Activated naive CD4-positive, alpha-beta T cell treated with anti-CD3 and anti-CD28 coated beads for 36 hours (primary cell): ENCODE measurements at regions of chrX and their contacts with region 1.

Region 1: GRCh38 chrX:68828740-68829552 is at the start of gene EFNB1:
- DNase-seq: peak; percentile 86
- H3K4me3 Mint-ChIP-seq: peak within 1 kb of the TSS; percentile 81
- H3K27ac Mint-ChIP-seq: no peak within 1 kb of the TSS
- H3K4me1 Mint-ChIP-seq: peaks cover 14% of the 10 kb centered on the region
- H3K27me3 Mint-ChIP-seq: no peaks in the 10 kb centered on the region
- total RNA-seq, gene EFNB1: 3.9 to 4.2 TPM

Region 2: GRCh38 chrX:68504237-68504636 is 324.7 kb before region 1 on chrX:
- CTCF ChIA-PET with region 1: no interaction called
- intact Hi-C with region 1: loop called (anchors 5 kb)
- DNase-seq: peak; percentile 86
- H3K4me3 Mint-ChIP-seq: no peak overlapping the region
- H3K27ac Mint-ChIP-seq: peak overlapping the region; percentile 92
- H3K4me1 Mint-ChIP-seq: peaks cover 62% of the 10 kb centered on the region
- H3K27me3 Mint-ChIP-seq: no peaks in the 10 kb centered on the region

Region 3: GRCh38 chrX:69060631-69061408 is 231.9 kb after region 1 on chrX:
- CTCF ChIA-PET with region 1: interaction called, 3 read pairs
- intact Hi-C with region 1: loop called (anchors 1 kb)
- DNase-seq: no peak
- H3K4me3 Mint-ChIP-seq: no peak overlapping the region
- H3K27ac Mint-ChIP-seq: no peak overlapping the region
- H3K4me1 Mint-ChIP-seq: no peaks in the 10 kb centered on the region
- H3K27me3 Mint-ChIP-seq: no peaks in the 10 kb centered on the region

Region 4: DNA sequence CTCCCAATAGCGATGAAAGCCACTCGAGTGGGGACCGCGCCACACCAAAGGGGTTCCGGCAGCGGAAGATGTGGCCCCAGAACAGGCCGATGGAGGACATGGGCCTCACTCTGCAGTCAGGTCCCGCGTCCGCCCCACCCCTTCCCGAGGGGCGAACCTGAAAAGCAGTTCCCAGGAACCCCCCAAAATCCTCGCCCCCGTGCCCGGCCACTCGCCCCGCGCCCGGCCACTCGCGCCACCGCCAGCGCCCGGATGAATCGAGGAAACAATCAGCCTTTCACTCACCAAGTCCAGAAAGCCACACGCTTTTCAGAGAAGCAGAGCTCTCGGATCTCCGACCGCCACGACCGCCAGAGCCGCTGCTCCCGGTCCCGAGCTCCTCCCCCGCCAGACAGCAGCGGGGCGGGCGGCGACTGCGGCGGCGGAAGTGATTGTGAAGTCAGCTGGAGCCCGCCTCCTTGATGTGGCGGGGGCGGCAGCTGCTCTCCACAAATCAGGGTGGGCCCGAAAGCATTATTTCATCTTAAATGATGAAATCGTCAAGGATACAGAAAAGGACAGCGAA is 336.2 kb after region 1 on chrX and contains the start of gene PJA1:
- CTCF ChIA-PET with region 1: interaction called, 8 read pairs
- intact Hi-C with region 1: loop called (anchors 1 kb)
- DNase-seq: peak; percentile 76
- H3K4me3 Mint-ChIP-seq: peak within 1 kb of the TSS; percentile 83
- H3K27ac Mint-ChIP-seq: peak within 1 kb of the TSS; percentile 82
- H3K4me1 Mint-ChIP-seq: peaks cover 33% of the 10 kb centered on the region
- H3K27me3 Mint-ChIP-seq: no peaks in the 10 kb centered on the region
- total RNA-seq, gene PJA1: 10.7 to 11.0 TPM

Region 5: GRCh38 chrX:69285881-69286564 is 457.1 kb after region 1 on chrX:
- CTCF ChIA-PET with region 1: interaction called, 12 read pairs
- intact Hi-C with region 1: loop called (anchors 1 kb)
- DNase-seq: peak; percentile 60
- H3K4me3 Mint-ChIP-seq: no peak overlapping the region
- H3K27ac Mint-ChIP-seq: no peak overlapping the region
- H3K4me1 Mint-ChIP-seq: no peaks in the 10 kb centered on the region
- H3K27me3 Mint-ChIP-seq: no peaks in the 10 kb centered on the region